Transverse colon (tissue), 4 donors: ENCODE measurements at regions of chr2 and their contacts with region 1.

Region 1: GRCh38 chr2:36871068-36871707 is 95.1 kb downstream of the STRN start:
- DNase-seq: no peak
- H3K4me3 ChIP-seq: no peak overlapping the region
- H3K27ac ChIP-seq: no peak overlapping the region
- H3K4me1 ChIP-seq: no peaks in the 10 kb centered on the region
- H3K27me3 ChIP-seq: no peaks in the 10 kb centered on the region
- CTCF ChIP-seq: no peak
- EP300 ChIP-seq: no peak
- POLR2A ChIP-seq: no peak

Region 2: GRCh38 chr2:36902385-36903120 is 31.4 kb after region 1 on chr2:
- in situ Hi-C with region 1: no loop called
- intact Hi-C with region 1: loop called (anchors 2 kb)
- DNase-seq: no peak
- H3K4me3 ChIP-seq: no peak overlapping the region
- H3K27ac ChIP-seq: no peak overlapping the region
- H3K4me1 ChIP-seq: no peaks in the 10 kb centered on the region
- H3K27me3 ChIP-seq: no peaks in the 10 kb centered on the region
- CTCF ChIP-seq: no peak
- EP300 ChIP-seq: no peak
- POLR2A ChIP-seq: no peak

Region 3: GRCh38 chr2:36918307-36918706 is 47.1 kb after region 1 on chr2:
- in situ Hi-C with region 1: no loop called
- intact Hi-C with region 1: no loop called
- DNase-seq: no peak
- H3K4me3 ChIP-seq: no peak overlapping the region
- H3K27ac ChIP-seq: no peak overlapping the region
- H3K4me1 ChIP-seq: no peaks in the 10 kb centered on the region
- H3K27me3 ChIP-seq: no peaks in the 10 kb centered on the region
- CTCF ChIP-seq: peak in 1 of 5 experiments; percentile 10
- EP300 ChIP-seq: no peak
- POLR2A ChIP-seq: no peak